HepG2 (cell line): ENCODE measurements at regions of chr12 and their contacts with region 1.

Region 1: DNA sequence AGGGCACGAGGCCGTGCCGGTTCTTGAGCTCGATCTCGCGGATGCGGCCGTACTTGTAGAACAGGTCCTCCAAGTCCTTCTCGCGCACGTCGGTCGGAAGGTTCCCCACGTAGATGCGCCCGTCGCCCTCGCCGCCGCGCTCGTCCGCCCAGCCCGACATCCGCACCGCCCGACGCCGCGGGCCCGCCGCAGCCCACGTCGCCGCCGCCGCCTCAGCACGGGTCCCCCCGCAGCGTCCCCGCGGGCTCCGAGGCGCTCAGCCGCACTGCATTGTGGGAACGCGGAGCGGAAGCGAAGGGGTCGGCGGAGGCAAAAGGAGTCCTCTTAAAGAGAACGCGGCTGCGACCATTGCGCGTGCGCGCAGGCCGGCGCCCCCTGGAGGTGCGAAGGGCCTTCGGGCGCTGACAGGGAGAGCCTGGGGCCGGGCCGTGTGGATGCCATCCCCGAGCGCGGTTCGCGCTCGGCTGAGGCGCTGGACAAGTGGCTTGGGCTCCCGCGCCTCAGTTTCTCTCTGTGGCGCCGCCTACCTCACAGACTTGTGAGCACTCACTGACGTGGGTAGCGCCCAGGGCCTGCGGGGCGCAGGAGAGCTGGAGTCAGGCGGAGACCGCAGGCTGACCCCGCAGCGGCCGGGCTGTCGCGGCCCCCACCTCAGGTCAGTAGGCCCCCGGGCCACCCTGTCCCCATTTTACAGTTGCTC is at the start of gene SRSF9:
- DNase-seq: peak; percentile 90
- ATAC-seq: peak; percentile 91
- H3K4me3 ChIP-seq: peak within 1 kb of the TSS; percentile 74 to 85 (median 81)
- H3K27ac ChIP-seq: peak within 1 kb of the TSS; percentile 78
- H3K4me1 ChIP-seq: peaks cover 62% of the 10 kb centered on the region
- H3K27me3 ChIP-seq: no peaks in the 10 kb centered on the region; a peak in 1 of 5 replicates
- CTCF ChIP-seq: peak; percentile 96
- EP300 ChIP-seq: 0 out of 4 replicates have a peak, but pooled peaks of 1 of the 2 experiments have one; percentile 10
- POLR2A ChIP-seq: peak; percentile 58 to 72
- RAD21 ChIP-seq: peak; percentile 53; the same call in 1 of the 2 replicates
- total RNA-seq, gene SRSF9: 144 and 153 TPM in 2 replicates

Region 2: DNA sequence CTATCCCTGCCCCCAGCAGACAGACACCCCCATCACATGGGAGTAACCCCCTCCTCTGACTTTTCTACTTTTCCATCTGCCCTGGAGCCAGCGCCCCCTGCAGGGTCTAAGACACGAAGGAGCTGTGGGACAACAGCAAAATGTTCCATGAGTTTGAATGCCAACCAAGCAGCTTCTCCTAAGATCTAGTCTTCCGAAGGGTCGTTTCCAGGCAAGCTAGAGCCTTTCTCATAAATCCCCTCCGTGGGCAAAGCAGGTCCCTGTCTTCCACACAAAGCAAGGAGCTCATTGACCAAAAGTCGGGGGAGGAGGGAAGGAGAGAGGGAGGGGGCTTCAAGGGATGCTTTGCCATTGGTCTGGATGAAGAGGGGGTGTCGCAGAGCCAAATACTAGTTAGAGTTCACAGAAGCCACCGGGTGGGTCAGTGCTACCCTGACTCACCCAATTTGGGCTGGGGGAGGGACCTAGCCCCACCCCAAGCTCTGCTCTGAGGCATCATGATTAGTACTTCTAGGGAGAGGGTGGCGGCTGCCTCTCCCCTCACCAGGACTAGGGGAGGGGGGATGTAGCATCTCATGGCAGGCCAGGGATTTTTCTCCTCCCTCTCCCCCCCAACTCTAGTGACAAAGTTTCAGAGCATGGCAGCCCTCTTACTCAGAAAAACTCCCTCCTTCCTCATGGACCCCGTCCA is 102.2 kb before region 1 on chr12:
- CTCF ChIA-PET with region 1: no interaction called
- POLR2A ChIA-PET with region 1: no interaction called
- in situ Hi-C with region 1: no loop called
- intact Hi-C with region 1: no loop called
- DNase-seq: no peak
- ATAC-seq: no peak
- H3K4me3 ChIP-seq: no peak overlapping the region; a peak in 1 of 6 replicates
- H3K27ac ChIP-seq: no peak overlapping the region
- H3K4me1 ChIP-seq: peaks cover 40% of the 10 kb centered on the region
- H3K27me3 ChIP-seq: peaks cover 9 to 43% of the 10 kb centered on the region in 2 experiments; a peak in 4 of 5 replicates
- CTCF ChIP-seq: peak; percentile 56
- EP300 ChIP-seq: no peak
- POLR2A ChIP-seq: no peak
- RAD21 ChIP-seq: no peak

Region 3: DNA sequence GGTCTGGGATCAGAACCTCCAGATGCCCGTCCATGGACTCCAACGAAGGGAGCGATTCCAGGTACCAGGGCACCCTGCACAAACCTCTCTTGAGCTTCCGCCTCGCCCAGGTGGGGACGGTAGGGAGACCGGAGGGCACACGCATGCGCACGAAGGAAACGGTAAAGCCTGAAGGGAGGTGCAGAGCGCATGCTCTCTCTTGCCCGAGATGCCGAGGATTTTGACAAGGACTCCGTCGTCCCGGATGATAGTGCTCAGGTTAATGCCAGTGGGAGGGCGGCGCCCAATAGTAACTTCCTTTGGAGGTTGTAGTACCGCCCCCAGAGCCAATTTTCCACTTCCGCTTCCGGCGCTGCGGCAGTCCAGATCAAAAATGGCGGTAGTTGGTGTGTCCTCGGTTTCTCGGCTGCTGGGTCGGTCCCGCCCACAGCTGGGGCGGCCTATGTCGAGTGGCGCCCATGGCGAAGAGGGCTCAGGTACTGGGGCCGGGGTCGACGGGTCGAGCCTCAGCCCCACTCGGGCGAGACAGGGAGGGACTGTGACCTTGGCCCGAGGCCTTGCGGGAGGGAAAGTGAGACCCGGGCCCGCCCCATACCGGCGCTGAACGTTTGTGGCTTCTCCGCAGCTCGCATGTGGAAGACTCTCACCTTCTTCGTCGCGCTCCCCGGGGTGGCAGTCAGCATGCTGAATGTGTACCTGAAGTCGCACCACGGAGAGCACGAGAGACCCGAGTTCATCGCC is 31.7 kb before region 1 on chr12 and contains the start of gene COX6A1:
- CTCF ChIA-PET with region 1: interaction called, 3 read pairs
- POLR2A ChIA-PET with region 1: interaction called, 3 read pairs
- in situ Hi-C with region 1: no loop called
- intact Hi-C with region 1: loop called (anchors 2 kb)
- DNase-seq: peak; percentile 99
- ATAC-seq: peak; percentile 97
- H3K4me3 ChIP-seq: peak within 1 kb of the TSS; percentile 85 to 96 (median 90)
- H3K27ac ChIP-seq: peak within 1 kb of the TSS; percentile 52
- H3K4me1 ChIP-seq: peaks cover 31% of the 10 kb centered on the region
- H3K27me3 ChIP-seq: no peaks in the 10 kb centered on the region; a peak in 1 of 5 replicates
- CTCF ChIP-seq: peak; percentile 38
- EP300 ChIP-seq: no peak
- POLR2A ChIP-seq: peak; percentile 71 to 85
- RAD21 ChIP-seq: no peak; the same call in 1 of the 2 replicates
- total RNA-seq, gene COX6A1: 204 and 542 TPM in 2 replicates

Region 4: DNA sequence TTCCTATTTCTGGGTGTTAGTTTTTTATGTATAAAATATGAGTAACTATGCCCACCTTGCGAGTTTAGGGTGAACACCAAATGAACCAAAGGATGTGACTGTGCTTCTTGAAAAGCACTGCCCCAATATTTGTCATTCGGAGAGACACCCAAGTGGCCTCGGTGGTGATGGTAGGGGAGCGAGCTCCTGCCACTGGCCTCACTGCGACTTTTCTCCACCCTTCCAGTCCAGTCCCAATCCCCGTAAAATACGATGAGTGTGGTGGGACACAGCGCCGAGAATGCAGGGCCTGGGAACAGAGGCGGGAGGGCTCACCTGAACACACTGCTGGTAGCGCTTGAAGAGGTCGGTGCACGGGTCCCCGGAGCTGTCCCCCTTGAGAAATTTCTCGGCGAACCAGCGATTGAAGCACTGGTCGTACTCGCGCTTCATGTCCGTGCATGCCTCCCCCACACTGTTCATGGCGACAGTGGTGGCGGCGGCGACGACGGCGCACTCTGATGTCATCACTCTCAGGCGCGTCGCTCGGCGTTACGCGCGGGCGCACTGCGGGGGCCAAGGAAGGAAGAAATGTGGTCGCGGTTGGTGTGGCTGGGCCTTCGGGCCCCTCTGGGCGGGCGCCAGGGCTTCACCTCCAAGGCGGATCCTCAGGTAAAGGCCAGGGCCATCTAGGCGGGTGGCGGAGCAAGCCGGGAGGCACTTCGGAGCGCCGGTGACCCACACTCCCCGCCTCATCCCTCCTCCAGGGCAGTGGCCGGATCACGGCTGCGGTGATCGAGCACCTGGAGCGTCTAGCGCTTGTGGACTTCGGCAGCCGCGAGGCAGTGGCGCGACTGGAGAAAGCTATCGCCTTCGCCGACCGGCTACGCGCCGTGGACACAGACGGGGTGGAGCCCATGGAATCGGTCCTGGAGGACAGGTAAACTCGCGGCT is 23.4 kb before region 1 on chr12 and contains the starts of genes GATC and TRIAP1:
- CTCF ChIA-PET with region 1: no interaction called
- POLR2A ChIA-PET with region 1: interaction called, 5 read pairs
- in situ Hi-C with region 1: no loop called
- intact Hi-C with region 1: loop called (anchors 2 kb)
- DNase-seq: peak; percentile 71
- ATAC-seq: peak; percentile 93
- H3K4me3 ChIP-seq: peak within 1 kb of the TSS; percentile 81 to 97 (median 82)
- H3K27ac ChIP-seq: peak within 1 kb of the TSS; percentile 84
- H3K4me1 ChIP-seq: peaks cover 30% of the 10 kb centered on the region
- H3K27me3 ChIP-seq: no peaks in the 10 kb centered on the region; a peak in 1 of 5 replicates
- CTCF ChIP-seq: 0 out of 2 replicates have a peak, but pooled peaks have one; percentile 9
- EP300 ChIP-seq: no peak; a peak in 2 of 4 replicates
- POLR2A ChIP-seq: peak; percentile 90 to 98
- RAD21 ChIP-seq: peak; percentile 43
- total RNA-seq, gene GATC: 29.7 and 38.5 TPM in 2 replicates
- total RNA-seq, gene TRIAP1: 117 and 178 TPM in 2 replicates

Region 5: DNA sequence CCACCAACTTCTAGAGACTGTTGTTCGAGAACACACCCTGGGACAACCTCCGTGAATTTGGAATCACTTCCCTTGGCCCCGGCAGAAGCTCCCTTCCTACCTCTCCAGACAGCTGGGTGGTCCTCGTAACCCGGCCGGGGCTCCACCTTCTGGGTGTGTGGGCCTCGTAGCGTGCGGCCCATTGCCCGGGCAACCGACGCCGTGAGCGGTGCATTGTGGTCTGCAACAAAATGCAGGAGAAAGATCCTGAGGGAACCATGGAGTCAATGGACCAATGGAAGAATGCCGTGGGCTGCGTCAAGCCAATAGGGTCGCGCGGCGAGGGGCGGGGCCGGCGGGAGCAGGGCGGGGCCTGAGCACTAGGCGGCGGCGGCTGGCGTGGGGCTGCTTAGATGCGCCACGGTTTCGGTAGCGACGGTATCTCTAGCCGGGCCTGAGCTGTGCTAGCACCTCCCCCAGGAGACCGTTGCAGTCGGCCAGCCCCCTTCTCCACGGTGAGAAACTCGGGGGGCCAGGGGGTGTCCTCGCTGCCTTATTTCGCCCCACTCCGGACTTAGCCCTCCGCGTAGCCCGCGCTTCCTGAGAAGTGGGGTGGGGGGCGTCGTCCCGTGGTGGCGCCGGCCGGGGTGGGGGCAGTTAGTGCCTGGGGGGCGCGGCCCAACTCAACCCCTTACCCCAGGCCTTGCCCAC is 26.3 kb after region 1 on chr12 and contains the start of gene DYNLL1:
- CTCF ChIA-PET with region 1: no interaction called
- POLR2A ChIA-PET with region 1: interaction called, 16 read pairs
- in situ Hi-C with region 1: no loop called
- intact Hi-C with region 1: loop called (anchors 2 kb)
- DNase-seq: peak; percentile 93
- ATAC-seq: peak; percentile 94
- H3K4me3 ChIP-seq: peak within 1 kb of the TSS; percentile 95 to 100 (median 97)
- H3K27ac ChIP-seq: peak within 1 kb of the TSS; percentile 69
- H3K4me1 ChIP-seq: peaks cover 28% of the 10 kb centered on the region
- H3K27me3 ChIP-seq: no peaks in the 10 kb centered on the region; a peak in 1 of 5 replicates
- CTCF ChIP-seq: no peak; the same call in 1 of the 2 replicates
- EP300 ChIP-seq: peak in 1 of 2 experiments; percentile 55; a peak in 3 of 4 replicates
- POLR2A ChIP-seq: peak; percentile 95 to 100
- RAD21 ChIP-seq: peak; percentile 6; the same call in 1 of the 2 replicates
- total RNA-seq, gene DYNLL1: 271 and 403 TPM in 2 replicates

Region 6: DNA sequence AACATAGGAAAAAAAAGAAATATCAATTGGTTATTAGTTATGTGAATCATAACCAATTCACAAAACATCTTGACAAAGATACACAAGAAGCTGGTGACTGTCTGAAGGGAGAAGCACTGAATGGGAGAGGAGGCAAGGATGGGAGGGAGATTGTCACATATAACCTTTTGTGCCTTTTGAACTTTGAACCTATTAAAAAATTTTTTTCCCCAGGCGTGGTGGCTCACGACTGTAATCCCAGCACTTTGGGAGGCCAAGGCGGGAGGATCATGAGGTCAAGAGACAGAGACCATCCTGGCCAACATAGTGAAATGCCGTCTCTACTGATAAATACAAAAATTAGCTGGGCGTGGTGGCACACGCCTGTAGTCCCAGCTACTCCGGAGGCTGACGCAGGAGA is 38.9 kb after region 1 on chr12:
- CTCF ChIA-PET with region 1: no interaction called
- POLR2A ChIA-PET with region 1: no interaction called
- in situ Hi-C with region 1: no loop called
- intact Hi-C with region 1: no loop called
- DNase-seq: no peak
- ATAC-seq: no peak
- H3K4me3 ChIP-seq: no peak overlapping the region
- H3K27ac ChIP-seq: no peak overlapping the region
- H3K4me1 ChIP-seq: peaks cover 8% of the 10 kb centered on the region
- H3K27me3 ChIP-seq: no peaks in the 10 kb centered on the region
- CTCF ChIP-seq: no peak
- EP300 ChIP-seq: no peak
- POLR2A ChIP-seq: no peak
- RAD21 ChIP-seq: no peak

Region 7: GRCh38 chr12:120528861-120529525 is 59.4 kb after region 1 on chr12 and contains the start of gene COQ5:
- CTCF ChIA-PET with region 1: no interaction called
- POLR2A ChIA-PET with region 1: interaction called, 10 read pairs
- in situ Hi-C with region 1: no loop called
- intact Hi-C with region 1: loop called (anchors 2 kb)
- DNase-seq: peak; percentile 80
- ATAC-seq: peak; percentile 92
- H3K4me3 ChIP-seq: peak within 1 kb of the TSS; percentile 72 to 95 (median 82)
- H3K27ac ChIP-seq: peak within 1 kb of the TSS; percentile 97
- H3K4me1 ChIP-seq: no peaks in the 10 kb centered on the region
- H3K27me3 ChIP-seq: no peaks in the 10 kb centered on the region
- CTCF ChIP-seq: 0 out of 2 replicates have a peak, but pooled peaks have one; percentile 5
- EP300 ChIP-seq: no peak
- POLR2A ChIP-seq: peak; percentile 85 to 86
- RAD21 ChIP-seq: no peak
- total RNA-seq, gene COQ5: 41.5 and 59.8 TPM in 2 replicates